Spleen (tissue), 13 donors: ENCODE measurements at regions of chr10 and their contacts with region 1.

Region 1: DNA sequence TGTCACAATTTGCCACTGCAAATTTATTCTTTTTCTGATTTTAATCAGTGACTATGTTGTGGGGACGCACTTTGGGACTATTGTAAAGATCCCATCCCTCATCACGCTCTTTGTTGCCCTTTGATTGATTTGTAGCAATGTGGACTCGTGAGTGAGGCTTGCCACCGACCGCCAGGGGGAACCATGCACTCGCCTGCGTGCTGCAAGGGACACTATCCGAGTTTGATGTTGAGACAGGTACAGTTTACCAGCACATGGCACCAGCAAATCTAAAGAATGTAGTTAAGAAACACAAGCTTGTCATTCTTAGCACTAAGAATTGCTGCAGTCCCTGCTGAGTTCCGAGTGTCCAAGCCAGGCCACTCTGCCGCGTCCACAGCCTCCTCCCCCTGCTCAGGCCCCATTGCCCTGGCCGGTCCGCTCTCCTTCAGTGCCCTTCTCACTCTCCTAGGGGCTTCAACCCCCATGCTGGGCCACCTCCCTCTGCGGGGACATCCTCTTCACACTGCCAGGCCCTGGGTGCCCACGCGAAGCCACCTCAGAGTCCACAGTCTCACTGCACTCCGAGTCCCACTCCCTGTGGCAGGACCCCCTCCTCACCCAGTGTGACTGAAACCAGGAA is 2.0 kb upstream of the SFTPA2 start:
- DNase-seq: peak; percentile 89
- H3K4me3 ChIP-seq: no peak overlapping the region
- H3K27ac ChIP-seq: no peak overlapping the region
- H3K4me1 ChIP-seq: peaks cover 0 to 8% (median 1%) of the 10 kb centered on the region in 6 donors
- H3K27me3 ChIP-seq: peaks cover 0 to 13% (median 3%) of the 10 kb centered on the region in 7 donors
- CTCF ChIP-seq: peak; percentile 11 to 78 (median 70)
- POLR2A ChIP-seq: no peak

Region 2: DNA sequence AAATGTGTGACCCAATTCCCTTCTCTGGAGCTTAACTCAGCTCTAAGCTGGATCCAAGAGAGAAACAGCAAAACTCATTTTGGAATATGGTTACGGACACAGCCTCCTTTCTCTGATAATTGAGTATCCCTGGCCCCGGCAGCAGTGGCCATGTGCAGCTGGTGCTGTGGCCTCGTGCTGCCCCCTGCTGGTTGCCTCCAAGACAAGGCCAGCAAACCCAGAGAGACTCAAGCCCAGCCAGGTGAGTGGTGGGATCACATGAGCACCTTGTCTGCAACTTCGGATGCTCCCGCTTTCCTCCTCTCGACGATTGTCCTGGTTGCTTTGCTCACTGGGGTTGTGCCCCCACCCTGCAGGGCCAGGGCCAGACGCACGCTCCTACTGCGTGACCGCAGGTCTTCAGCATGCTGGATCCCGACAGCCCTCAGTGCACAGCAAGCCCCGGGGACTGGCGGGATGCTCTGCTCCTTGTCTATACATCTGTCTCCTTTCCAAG is 367.2 kb after region 1 on chr10:
- intact Hi-C with region 1: loop called (anchors 5 kb)
- DNase-seq: peak; percentile 91
- H3K4me3 ChIP-seq: no peak overlapping the region
- H3K27ac ChIP-seq: no peak overlapping the region
- H3K4me1 ChIP-seq: peaks cover 5 to 15% (median 8%) of the 10 kb centered on the region in 6 donors
- H3K27me3 ChIP-seq: peaks cover 0 to 22% (median 4%) of the 10 kb centered on the region in 7 donors
- CTCF ChIP-seq: peak; percentile 51 to 90 (median 84)
- POLR2A ChIP-seq: no peak